ENCODE measurements at regions of chr20 and their contacts with region 1.

Region 1: DNA sequence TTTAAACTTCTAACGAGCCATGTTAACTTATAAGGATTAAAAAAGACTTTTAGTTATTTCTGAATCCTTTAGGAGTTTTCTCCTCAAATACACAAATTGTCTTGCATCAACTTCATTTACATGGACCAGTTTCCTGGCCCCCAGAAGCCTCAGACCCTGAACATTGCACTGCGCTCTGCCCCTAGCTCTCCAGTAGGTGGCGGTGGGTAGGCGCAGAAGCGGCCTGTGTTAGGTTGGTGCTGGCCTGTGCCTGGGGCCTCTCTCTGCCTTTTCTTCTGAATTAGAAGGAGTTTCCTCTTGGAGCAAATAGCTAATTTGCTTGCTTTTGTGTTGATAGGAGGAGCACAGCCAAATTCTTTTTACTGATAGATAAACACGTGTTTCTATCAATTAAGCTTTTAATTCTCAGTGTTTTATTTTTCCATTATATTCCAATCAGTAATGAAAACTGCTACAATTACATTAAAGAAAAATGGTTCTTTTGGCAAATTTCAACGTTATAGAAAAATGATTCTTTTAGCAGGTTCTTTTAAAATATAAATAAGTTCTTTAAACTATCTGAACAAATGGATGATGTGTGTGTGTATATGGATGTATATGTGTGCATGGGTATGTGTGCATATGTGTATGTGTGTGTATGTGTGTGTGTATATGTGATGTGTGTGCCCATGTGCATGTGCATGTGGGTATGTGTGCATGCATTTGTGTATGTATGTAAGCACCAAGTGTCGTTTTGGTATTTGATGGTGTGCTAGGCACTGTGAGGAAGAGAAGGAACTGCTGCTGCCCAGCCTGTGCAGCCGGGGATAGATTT is 44.5 kb downstream of the DTD1 start:
- DNase-seq: peak; percentile 9 to 64 (median 47)
- ATAC-seq: peak; percentile 88
- H3K4me3 ChIP-seq: no peak overlapping the region
- H3K4me3 Mint-ChIP-seq: no peak overlapping the region
- H3K27ac ChIP-seq: no peak overlapping the region
- H3K27ac Mint-ChIP-seq: no peak overlapping the region
- H3K4me1 ChIP-seq: no peaks in the 10 kb centered on the region
- H3K4me1 Mint-ChIP-seq: no peaks in the 10 kb centered on the region
- H3K27me3 ChIP-seq: no peaks in the 10 kb centered on the region
- H3K27me3 Mint-ChIP-seq: no peaks in the 10 kb centered on the region
- CTCF ChIP-seq: peak; percentile 84

Region 2: GRCh38 chr20:18857640-18858039 is 225.2 kb after region 1 on chr20:
- CTCF ChIA-PET with region 1: no interaction called
- POLR2A ChIA-PET with region 1: no interaction called
- intact Hi-C with region 1: no loop called
- DNase-seq: no peak
- ATAC-seq: no peak
- H3K4me3 ChIP-seq: no peak overlapping the region
- H3K4me3 Mint-ChIP-seq: no peak overlapping the region
- H3K27ac ChIP-seq: no peak overlapping the region
- H3K27ac Mint-ChIP-seq: no peak overlapping the region
- H3K4me1 ChIP-seq: no peaks in the 10 kb centered on the region
- H3K4me1 Mint-ChIP-seq: no peaks in the 10 kb centered on the region
- H3K27me3 ChIP-seq: peaks cover 0 to 2% of the 10 kb centered on the region in 2 experiments
- H3K27me3 Mint-ChIP-seq: peaks cover 8% of the 10 kb centered on the region
- CTCF ChIP-seq: no peak

Region 3: GRCh38 chr20:19056909-19057308 is 424.5 kb after region 1 on chr20:
- CTCF ChIA-PET with region 1: interaction called, 3 read pairs
- POLR2A ChIA-PET with region 1: no interaction called
- intact Hi-C with region 1: loop called in 1 of 2 experiments (anchors 10 kb)
- DNase-seq: peak in 1 of 9 experiments; percentile 8
- ATAC-seq: no peak
- H3K4me3 ChIP-seq: no peak overlapping the region
- H3K4me3 Mint-ChIP-seq: no peak overlapping the region
- H3K27ac ChIP-seq: no peak overlapping the region
- H3K27ac Mint-ChIP-seq: no peak overlapping the region
- H3K4me1 ChIP-seq: no peaks in the 10 kb centered on the region
- H3K4me1 Mint-ChIP-seq: no peaks in the 10 kb centered on the region
- H3K27me3 ChIP-seq: no peaks in the 10 kb centered on the region
- H3K27me3 Mint-ChIP-seq: peaks cover 7% of the 10 kb centered on the region
- CTCF ChIP-seq: no peak

Region 4: DNA sequence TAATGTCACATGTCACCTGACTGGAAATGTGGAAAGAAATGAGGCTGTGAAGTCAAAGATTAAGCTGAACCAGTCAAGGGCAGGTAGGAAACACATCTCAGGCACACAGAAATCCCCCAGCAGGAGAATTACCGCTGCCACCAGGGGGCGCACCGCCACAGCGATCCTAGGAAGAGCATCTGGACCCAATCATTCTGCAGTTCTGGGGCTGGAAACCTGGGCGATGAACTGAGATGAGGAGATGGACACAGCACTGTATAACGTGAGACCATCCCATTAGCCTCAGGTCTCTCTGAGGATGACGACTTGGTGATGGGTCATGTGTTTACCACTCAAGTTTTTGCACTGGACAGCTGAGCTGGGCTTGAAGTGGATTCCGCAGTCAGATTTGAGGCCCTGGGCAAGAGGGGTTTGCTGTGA is 573.6 kb after region 1 on chr20:
- CTCF ChIA-PET with region 1: interaction called, 3 read pairs
- POLR2A ChIA-PET with region 1: no interaction called
- intact Hi-C with region 1: loop called in 1 of 2 experiments (anchors 10 kb)
- DNase-seq: peak; percentile 25 to 77 (median 53)
- ATAC-seq: no peak
- H3K4me3 ChIP-seq: no peak overlapping the region
- H3K4me3 Mint-ChIP-seq: no peak overlapping the region
- H3K27ac ChIP-seq: no peak overlapping the region
- H3K27ac Mint-ChIP-seq: no peak overlapping the region
- H3K4me1 ChIP-seq: no peaks in the 10 kb centered on the region
- H3K4me1 Mint-ChIP-seq: no peaks in the 10 kb centered on the region
- H3K27me3 ChIP-seq: peaks cover 0 to 4% of the 10 kb centered on the region in 2 experiments
- H3K27me3 Mint-ChIP-seq: peaks cover 34% of the 10 kb centered on the region
- CTCF ChIP-seq: peak; percentile 72

Region 5: DNA sequence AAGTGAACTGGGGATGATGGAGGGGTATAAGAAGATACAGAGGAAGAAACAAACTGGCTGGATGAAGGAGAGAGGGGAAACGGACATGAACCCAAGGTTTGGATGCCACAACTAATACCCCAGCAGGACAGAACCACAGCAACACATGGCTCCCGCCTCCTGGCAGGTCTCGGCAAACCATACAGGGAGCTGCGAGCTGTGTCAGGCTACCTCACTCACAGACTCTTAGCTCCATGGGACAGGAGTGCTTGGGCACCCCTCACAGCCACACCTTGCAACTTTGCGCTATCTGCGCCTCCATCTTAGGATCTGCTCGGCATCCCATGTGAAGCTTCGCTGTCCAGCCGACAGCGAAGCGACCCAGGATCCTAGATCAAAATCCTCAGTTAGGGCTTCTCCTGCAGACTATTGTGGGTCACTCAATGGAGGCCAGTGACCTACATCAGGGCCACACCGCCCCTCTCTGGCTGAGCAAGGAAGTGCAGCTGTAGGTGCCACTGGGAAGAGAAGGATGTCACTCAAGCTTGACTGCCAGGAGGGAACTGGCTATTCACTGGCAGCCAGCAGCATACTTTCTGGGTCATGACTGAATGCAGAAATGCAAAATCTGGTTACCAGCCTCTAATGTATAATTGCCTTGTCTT is 951.3 kb after region 1 on chr20:
- CTCF ChIA-PET with region 1: interaction called, 3 read pairs
- POLR2A ChIA-PET with region 1: no interaction called
- intact Hi-C with region 1: loop called in 1 of 2 experiments (anchors 5 kb)
- DNase-seq: peak in 6 of 9 experiments; percentile 10 to 60 (median 42)
- ATAC-seq: no peak
- H3K4me3 ChIP-seq: no peak overlapping the region
- H3K4me3 Mint-ChIP-seq: no peak overlapping the region
- H3K27ac ChIP-seq: no peak overlapping the region
- H3K27ac Mint-ChIP-seq: no peak overlapping the region
- H3K4me1 ChIP-seq: no peaks in the 10 kb centered on the region
- H3K4me1 Mint-ChIP-seq: no peaks in the 10 kb centered on the region
- H3K27me3 ChIP-seq: no peaks in the 10 kb centered on the region
- H3K27me3 Mint-ChIP-seq: peaks cover 2% of the 10 kb centered on the region
- CTCF ChIP-seq: peak; percentile 19

Region 6: GRCh38 chr20:19661717-19662636 is 1029.6 kb after region 1 on chr20:
- CTCF ChIA-PET with region 1: interaction called, 4 read pairs
- POLR2A ChIA-PET with region 1: no interaction called
- intact Hi-C with region 1: loop called in 1 of 2 experiments (anchors 1 kb)
- DNase-seq: peak in 6 of 9 experiments; percentile 8 to 59 (median 48)
- ATAC-seq: no peak
- H3K4me3 ChIP-seq: no peak overlapping the region
- H3K4me3 Mint-ChIP-seq: no peak overlapping the region
- H3K27ac ChIP-seq: no peak overlapping the region
- H3K27ac Mint-ChIP-seq: no peak overlapping the region
- H3K4me1 ChIP-seq: no peaks in the 10 kb centered on the region
- H3K4me1 Mint-ChIP-seq: no peaks in the 10 kb centered on the region
- H3K27me3 ChIP-seq: no peaks in the 10 kb centered on the region
- H3K27me3 Mint-ChIP-seq: peaks cover 26% of the 10 kb centered on the region
- CTCF ChIP-seq: peak; percentile 92

Region 7: DNA sequence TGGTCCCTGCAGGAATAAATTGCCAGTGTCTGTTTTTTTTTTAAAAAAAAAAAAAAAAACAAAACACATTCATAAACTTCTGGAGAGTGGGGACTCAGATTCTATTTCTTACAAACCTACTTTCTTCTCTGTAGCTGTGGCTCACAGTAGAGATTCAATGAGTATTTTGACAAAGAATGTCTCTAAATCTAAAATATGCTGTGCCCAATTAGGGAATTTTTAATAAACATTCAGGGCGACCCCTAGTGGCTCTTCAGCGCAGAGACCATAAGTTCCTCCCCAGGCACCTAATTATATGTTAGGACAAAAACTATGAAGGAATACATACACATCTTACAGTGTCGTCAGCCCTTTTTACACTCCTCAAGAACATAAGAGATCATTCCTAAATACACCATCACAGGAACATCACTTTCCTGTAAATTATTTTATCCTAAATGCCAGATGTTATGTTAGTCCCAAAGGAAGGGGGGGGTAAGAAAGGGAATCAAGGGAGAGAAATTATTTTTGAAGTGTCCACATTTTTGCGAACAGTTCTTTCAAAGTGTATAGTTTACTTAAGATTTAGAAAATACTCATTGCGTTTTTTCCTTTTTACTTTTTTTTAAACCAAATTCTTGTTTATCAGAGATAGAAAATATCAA is 1362.9 kb after region 1 on chr20:
- CTCF ChIA-PET with region 1: no interaction called
- POLR2A ChIA-PET with region 1: no interaction called
- intact Hi-C with region 1: loop called (anchors 5 kb)
- DNase-seq: peak in 4 of 9 experiments; percentile 18 to 63 (median 38)
- ATAC-seq: no peak
- H3K4me3 ChIP-seq: no peak overlapping the region
- H3K4me3 Mint-ChIP-seq: no peak overlapping the region
- H3K27ac ChIP-seq: no peak overlapping the region
- H3K27ac Mint-ChIP-seq: no peak overlapping the region
- H3K4me1 ChIP-seq: no peaks in the 10 kb centered on the region
- H3K4me1 Mint-ChIP-seq: no peaks in the 10 kb centered on the region
- H3K27me3 ChIP-seq: no peaks in the 10 kb centered on the region
- H3K27me3 Mint-ChIP-seq: peaks cover 19% of the 10 kb centered on the region
- CTCF ChIP-seq: peak; percentile 69